Activated CD4-positive, alpha-beta T cell treated with anti-CD3 and anti-CD28 coated beads, Interleukin-2, amount 10 ng/mL, durations not matched to agents 7 days and 5 days (primary cell): ENCODE measurements at regions of chr5 and their contacts with region 1.

Region 1: GRCh38 chr5:150778517-150779396 is at the start of gene SMIM3:
- DNase-seq: peak; percentile 77
- H3K4me3 Mint-ChIP-seq: peak within 1 kb of the TSS; percentile 98
- H3K27ac Mint-ChIP-seq: peak within 1 kb of the TSS; percentile 87
- H3K4me1 Mint-ChIP-seq: peaks cover 64% of the 10 kb centered on the region
- H3K27me3 Mint-ChIP-seq: no peaks in the 10 kb centered on the region
- total RNA-seq, gene SMIM3: 8.4 to 8.9 TPM

Region 2: GRCh38 chr5:150764530-150764929 is 14.2 kb before region 1 on chr5:
- CTCF ChIA-PET with region 1: interaction called, 13 read pairs
- POLR2A ChIA-PET with region 1: no interaction called
- DNase-seq: no peak
- H3K4me3 Mint-ChIP-seq: no peak overlapping the region
- H3K27ac Mint-ChIP-seq: no peak overlapping the region
- H3K4me1 Mint-ChIP-seq: peaks cover 11% of the 10 kb centered on the region
- H3K27me3 Mint-ChIP-seq: no peaks in the 10 kb centered on the region

Region 3: GRCh38 chr5:150789943-150790611 is 11.3 kb after region 1 on chr5:
- CTCF ChIA-PET with region 1: interaction called, 10 read pairs
- POLR2A ChIA-PET with region 1: no interaction called
- DNase-seq: peak; percentile 68
- H3K4me3 Mint-ChIP-seq: peak overlapping the region; percentile 48
- H3K27ac Mint-ChIP-seq: peak overlapping the region; percentile 77
- H3K4me1 Mint-ChIP-seq: peaks cover 56% of the 10 kb centered on the region
- H3K27me3 Mint-ChIP-seq: no peaks in the 10 kb centered on the region

Region 4: DNA sequence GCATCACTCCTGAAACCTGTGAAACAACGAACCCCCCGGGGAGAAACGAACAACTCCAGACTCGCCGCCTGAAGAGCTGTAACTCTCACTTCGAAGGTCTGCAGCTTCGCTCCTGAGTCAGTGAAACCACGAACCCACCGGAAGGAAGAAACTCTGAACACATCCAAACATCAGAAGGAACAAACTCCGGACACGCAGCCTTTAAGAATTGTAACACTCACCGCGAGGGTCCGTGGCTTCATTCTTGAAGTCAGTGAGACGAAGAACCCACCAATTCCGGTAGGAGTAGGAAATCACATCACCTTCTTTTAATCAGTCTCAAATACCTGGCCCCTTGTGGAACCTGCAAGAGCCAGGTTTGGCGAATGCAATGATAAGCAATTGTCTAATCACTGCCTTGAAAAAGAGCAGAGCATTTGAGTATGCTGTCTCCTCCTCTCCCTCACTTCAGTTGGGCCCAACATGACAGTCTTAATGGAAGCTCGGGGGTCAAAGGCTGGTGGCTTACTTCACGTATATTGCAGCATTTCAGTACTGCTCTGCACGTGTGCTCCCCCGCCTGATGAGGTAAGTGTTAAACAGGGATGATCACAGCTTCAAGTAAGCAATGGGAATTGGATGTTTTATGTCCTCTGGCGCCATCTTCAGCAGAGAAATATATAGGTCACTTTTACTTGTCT is 68.0 kb after region 1 on chr5:
- CTCF ChIA-PET with region 1: interaction called, 11 read pairs
- POLR2A ChIA-PET with region 1: interaction called, 7 read pairs
- DNase-seq: peak; percentile 84
- H3K4me3 Mint-ChIP-seq: peak overlapping the region; percentile 66
- H3K27ac Mint-ChIP-seq: peak overlapping the region; percentile 89
- H3K4me1 Mint-ChIP-seq: peaks cover 22% of the 10 kb centered on the region
- H3K27me3 Mint-ChIP-seq: no peaks in the 10 kb centered on the region

Region 5: GRCh38 chr5:152607401-152608160 is 1828.8 kb after region 1 on chr5:
- CTCF ChIA-PET with region 1: no interaction called
- POLR2A ChIA-PET with region 1: no interaction called
- DNase-seq: no peak
- H3K4me3 Mint-ChIP-seq: no peak overlapping the region
- H3K27ac Mint-ChIP-seq: no peak overlapping the region
- H3K4me1 Mint-ChIP-seq: no peaks in the 10 kb centered on the region
- H3K27me3 Mint-ChIP-seq: no peaks in the 10 kb centered on the region